AG04449 (cell line): ENCODE measurements at regions of chr2 and their contacts with region 1.

Region 1: GRCh38 chr2:75199428-75200011 is at the start of gene TACR1:
- DNase-seq: no peak
- H3K4me3 ChIP-seq: peak within 1 kb of the TSS; percentile 58
- CTCF ChIP-seq: peak; percentile 90

Region 2: GRCh38 chr2:74719066-74719465 is 480.5 kb before region 1 on chr2:
- CTCF ChIA-PET with region 1: no interaction called
- POLR2A ChIA-PET with region 1: no interaction called
- DNase-seq: no peak
- H3K4me3 ChIP-seq: no peak overlapping the region
- CTCF ChIP-seq: no peak

Region 3: GRCh38 chr2:74982577-74982976 is 216.9 kb before region 1 on chr2:
- CTCF ChIA-PET with region 1: no interaction called
- POLR2A ChIA-PET with region 1: no interaction called
- DNase-seq: no peak
- H3K4me3 ChIP-seq: no peak overlapping the region
- CTCF ChIP-seq: peak; percentile 15

Region 4: DNA sequence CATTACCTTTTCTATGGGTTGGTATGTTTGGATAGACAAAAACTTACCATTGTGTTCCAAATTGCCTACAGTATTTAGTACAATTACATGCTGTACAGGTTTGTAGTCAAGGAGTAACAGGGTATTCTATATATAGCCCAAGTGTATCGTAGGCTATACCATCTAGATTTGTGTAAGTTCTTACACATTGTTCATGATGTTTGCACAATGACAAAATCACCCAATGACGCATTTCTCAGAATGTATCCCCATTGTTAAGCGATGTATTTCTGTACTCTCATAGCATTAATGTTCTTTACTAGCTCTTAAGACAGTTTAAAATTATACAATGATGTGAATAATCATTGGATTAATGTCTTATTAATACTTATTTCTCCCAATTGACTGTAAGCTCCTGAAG is 16.9 kb before region 1 on chr2:
- CTCF ChIA-PET with region 1: interaction called, 32 read pairs
- POLR2A ChIA-PET with region 1: no interaction called
- DNase-seq: no peak
- H3K4me3 ChIP-seq: no peak overlapping the region
- CTCF ChIP-seq: no peak

Region 5: GRCh38 chr2:75211266-75211770 is 11.8 kb after region 1 on chr2:
- CTCF ChIA-PET with region 1: interaction called, 20 read pairs
- POLR2A ChIA-PET with region 1: no interaction called
- DNase-seq: no peak
- H3K4me3 ChIP-seq: no peak overlapping the region
- CTCF ChIP-seq: no peak

Region 6: GRCh38 chr2:75241696-75242095 is 42.2 kb after region 1 on chr2:
- CTCF ChIA-PET with region 1: interaction called, 13 read pairs
- POLR2A ChIA-PET with region 1: no interaction called
- DNase-seq: no peak
- H3K4me3 ChIP-seq: no peak overlapping the region
- CTCF ChIP-seq: no peak

Region 7: DNA sequence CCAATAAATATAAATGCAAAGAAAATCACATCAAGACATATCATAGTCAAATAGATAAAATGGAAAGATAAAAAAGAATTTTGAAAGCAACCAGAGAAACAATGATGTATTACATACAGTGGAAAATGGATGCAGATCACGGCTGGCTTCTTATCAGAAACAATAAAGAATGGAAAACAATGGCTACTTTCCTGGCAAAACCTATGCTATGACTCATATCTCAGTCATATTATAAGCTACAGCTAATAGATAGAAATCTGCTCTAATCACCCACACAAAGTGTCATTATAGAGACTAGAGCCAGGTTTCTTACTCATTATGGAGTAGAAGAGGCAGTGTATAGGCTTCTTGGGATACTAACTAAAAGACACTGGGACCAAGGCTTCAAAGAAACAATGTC is 93.3 kb after region 1 on chr2:
- CTCF ChIA-PET with region 1: interaction called, 10 read pairs
- POLR2A ChIA-PET with region 1: no interaction called
- DNase-seq: no peak
- H3K4me3 ChIP-seq: no peak overlapping the region
- CTCF ChIP-seq: no peak

Region 8: GRCh38 chr2:75403991-75404428 is 204.5 kb after region 1 on chr2:
- CTCF ChIA-PET with region 1: interaction called, 32 read pairs
- POLR2A ChIA-PET with region 1: no interaction called
- DNase-seq: no peak
- H3K4me3 ChIP-seq: no peak overlapping the region
- CTCF ChIP-seq: peak; percentile 70

Region 9: DNA sequence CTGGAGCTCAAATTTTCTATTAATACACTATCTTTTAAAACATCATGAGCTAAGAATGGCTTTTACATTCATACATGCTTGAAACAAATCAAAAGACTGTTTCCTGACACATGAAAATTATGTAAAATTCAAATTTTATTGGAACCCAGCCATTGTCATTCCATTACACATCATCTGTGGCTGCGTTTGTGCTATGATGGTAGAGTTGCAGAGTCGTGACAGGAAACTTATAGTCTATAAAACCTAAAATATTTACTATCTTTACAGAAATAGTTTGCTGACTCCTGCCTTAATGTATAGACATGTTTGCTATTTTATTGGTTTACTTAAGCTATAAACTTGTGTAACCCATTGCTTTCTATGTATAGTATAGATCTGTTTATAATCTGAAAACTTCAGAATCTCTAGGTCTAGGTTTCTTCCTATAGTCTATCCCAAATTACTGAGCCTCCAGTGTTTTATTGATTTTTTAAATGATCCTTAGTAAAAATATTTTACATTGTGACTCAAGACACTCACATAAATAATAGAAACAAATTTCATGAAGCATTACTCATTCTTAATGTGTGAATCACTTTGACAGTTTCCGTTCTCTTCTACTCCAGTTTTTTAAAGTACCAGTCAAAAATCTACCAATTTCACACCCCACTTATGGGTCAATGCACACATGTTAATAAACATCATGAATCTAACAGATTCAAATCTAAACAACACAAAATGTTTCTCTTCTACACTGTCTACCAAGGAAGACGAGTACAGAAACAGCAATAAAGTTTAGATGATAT is 420.6 kb after region 1 on chr2:
- CTCF ChIA-PET with region 1: no interaction called
- POLR2A ChIA-PET with region 1: no interaction called
- DNase-seq: no peak
- H3K4me3 ChIP-seq: no peak overlapping the region
- CTCF ChIP-seq: no peak